Activated CD8-positive, alpha-beta T cell treated with anti-CD3 and anti-CD28 coated beads, Interleukin-2, amount 10 ng/mL, durations not matched to agents 7 days and 5 days (primary cell): ENCODE measurements at regions of chr1 and their contacts with region 1.

Region 1: DNA sequence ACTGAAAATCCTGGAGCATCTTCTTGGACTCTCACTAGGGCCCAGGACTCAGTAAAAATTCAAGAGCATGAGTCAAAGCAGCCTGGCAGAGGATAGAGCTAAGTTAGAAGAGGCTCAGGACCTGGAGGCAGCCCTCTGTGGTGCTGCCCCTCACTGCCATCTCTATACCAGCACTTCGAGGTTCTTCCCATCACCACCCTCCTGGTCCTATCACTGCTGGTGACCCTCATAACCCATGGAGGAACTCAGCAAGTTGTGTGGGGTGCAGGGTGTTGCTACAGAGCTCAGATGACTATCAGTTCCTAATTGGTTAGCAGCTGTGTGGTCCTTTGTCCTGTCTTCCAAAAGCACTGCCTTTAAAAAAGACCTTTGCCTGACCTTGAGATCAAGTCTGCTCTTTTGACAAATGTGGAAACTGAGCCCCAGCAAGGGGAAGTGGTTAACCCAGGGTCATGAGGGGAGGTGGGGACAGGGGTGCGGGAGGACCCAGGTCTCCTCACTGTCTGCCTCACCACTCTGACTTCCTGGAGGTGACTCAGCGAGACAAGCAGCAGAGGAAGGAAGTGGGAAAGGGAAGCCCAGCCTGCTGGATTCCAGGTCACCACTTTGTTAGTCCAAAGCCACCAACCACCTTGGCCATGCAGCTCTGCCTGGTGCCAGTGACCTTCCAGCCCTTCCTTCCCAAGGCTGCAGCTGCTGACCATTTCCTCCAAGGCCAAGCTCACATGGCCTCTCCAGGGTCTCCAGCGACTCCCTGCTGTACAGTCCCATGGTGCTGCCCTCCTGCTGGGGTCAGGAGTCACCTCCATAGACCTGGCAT is 199.4 kb upstream of the EDN2 start:
- DNase-seq: peak; percentile 66
- ATAC-seq: peak; percentile 66
- H3K4me3 Mint-ChIP-seq: peak overlapping the region; percentile 44
- H3K27ac Mint-ChIP-seq: peak overlapping the region; percentile 86
- H3K4me1 Mint-ChIP-seq: peaks cover 97% of the 10 kb centered on the region
- H3K27me3 Mint-ChIP-seq: no peaks in the 10 kb centered on the region

Region 2: DNA sequence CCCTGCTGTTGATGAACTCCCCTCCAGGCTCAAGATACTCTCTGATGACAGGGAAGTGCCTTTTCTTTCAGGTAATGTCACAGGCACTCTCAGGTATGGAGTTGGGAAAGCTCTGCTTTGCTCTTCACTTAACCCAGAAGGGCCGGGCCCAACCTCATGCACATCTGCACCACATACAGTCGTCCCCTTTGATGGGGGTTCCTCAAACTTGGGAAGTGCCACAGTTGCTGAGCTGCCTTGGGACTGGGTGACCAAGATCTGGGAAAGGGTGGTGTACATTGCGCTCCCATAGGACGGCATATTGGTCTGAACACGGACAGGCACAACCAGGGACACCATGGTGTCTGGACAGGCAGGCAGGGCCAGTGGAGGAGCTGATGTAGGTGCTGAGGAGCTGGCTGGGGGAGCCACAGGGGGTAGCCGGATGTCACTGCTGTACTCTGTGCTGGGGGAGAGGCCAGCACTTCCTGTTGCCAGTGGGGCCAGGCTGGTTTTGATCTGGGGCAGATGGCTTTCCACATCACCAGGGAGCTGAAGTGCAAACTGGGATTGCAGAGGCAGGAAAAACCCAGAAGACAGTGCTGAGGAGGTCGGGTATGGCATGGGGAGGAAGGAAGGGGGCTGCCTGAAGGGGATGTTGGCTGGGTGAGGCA is 103.2 kb before region 1 on chr1:
- CTCF ChIA-PET with region 1: no interaction called
- POLR2A ChIA-PET with region 1: no interaction called
- DNase-seq: no peak
- ATAC-seq: no peak
- H3K4me3 Mint-ChIP-seq: no peak overlapping the region
- H3K27ac Mint-ChIP-seq: peak overlapping the region; percentile 62
- H3K4me1 Mint-ChIP-seq: peaks cover 32% of the 10 kb centered on the region
- H3K27me3 Mint-ChIP-seq: no peaks in the 10 kb centered on the region

Region 3: GRCh38 chr1:41662061-41662764 is 21.7 kb before region 1 on chr1:
- CTCF ChIA-PET with region 1: interaction called, 7 read pairs
- POLR2A ChIA-PET with region 1: interaction called, 13 read pairs
- DNase-seq: peak; percentile 84
- ATAC-seq: peak; percentile 88
- H3K4me3 Mint-ChIP-seq: peak overlapping the region; percentile 47
- H3K27ac Mint-ChIP-seq: peak overlapping the region; percentile 21
- H3K4me1 Mint-ChIP-seq: peaks cover 82% of the 10 kb centered on the region
- H3K27me3 Mint-ChIP-seq: no peaks in the 10 kb centered on the region